T-cell (primary cell): ENCODE measurements at regions of chr1 and their contacts with region 1.

Region 1: DNA sequence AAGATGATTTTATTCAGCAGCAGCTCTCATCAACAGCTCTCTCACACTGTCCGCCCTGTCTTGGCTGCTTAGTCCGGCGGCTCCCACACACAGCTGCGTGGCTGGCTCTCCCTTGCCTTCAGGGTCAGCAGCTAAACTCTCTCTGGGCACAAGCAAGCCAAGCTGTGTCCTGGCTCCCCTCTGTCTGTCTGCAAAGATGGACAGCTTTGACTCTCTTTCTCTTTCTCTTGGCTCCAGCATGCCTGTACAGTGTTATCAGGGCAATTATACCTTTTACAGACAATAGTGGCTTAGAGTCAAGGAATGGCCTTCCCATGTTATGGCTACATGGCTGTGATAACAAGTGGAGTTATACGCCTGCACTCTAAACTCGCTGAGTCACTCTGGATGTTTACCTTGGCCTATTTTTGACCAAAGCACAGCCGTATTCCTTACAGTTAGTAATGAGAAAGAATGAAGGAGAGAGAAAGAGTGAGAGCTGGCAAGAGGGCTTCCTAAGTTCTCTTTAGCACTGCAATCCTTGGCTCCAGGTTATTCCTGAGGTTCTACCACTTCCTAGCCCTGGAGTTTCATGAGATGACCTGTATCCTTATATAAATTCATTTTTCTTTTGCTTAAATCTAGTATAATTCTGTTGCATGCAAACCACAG is 59.9 kb upstream of the ZSWIM5 start:
- DNase-seq: no peak
- ATAC-seq: no peak
- H3K4me3 ChIP-seq: no peak overlapping the region
- H3K4me3 Mint-ChIP-seq: no peak overlapping the region
- H3K27ac ChIP-seq: no peak overlapping the region
- H3K27ac Mint-ChIP-seq: no peak overlapping the region
- H3K4me1 ChIP-seq: no peaks in the 10 kb centered on the region
- H3K4me1 Mint-ChIP-seq: no peaks in the 10 kb centered on the region
- H3K27me3 ChIP-seq: peaks cover 0 to 5% of the 10 kb centered on the region in 2 experiments
- H3K27me3 Mint-ChIP-seq: no peaks in the 10 kb centered on the region

Region 2: GRCh38 chr1:44485229-44485933 is 780.9 kb before region 1 on chr1:
- CTCF ChIA-PET with region 1: no interaction called
- POLR2A ChIA-PET with region 1: interaction called in 1 of 2 experiments, 13 read pairs
- DNase-seq: peak in 2 of 35 experiments; percentile 4 to 27
- ATAC-seq: peak in 1 of 4 experiments; percentile 14
- H3K4me3 ChIP-seq: no peak overlapping the region
- H3K4me3 Mint-ChIP-seq: no peak overlapping the region
- H3K27ac ChIP-seq: no peak overlapping the region
- H3K27ac Mint-ChIP-seq: no peak overlapping the region
- H3K4me1 ChIP-seq: no peaks in the 10 kb centered on the region
- H3K4me1 Mint-ChIP-seq: no peaks in the 10 kb centered on the region
- H3K27me3 ChIP-seq: peaks cover 0 to 27% of the 10 kb centered on the region in 2 experiments
- H3K27me3 Mint-ChIP-seq: peaks cover 25 to 32% of the 10 kb centered on the region in 2 donors